ENCODE measurements at regions of chr2 and their contacts with region 1.

Region 1: GRCh38 chr2:231597014-231597611 is 4.4 kb downstream of the TEX44 start:
- DNase-seq: no peak
- ATAC-seq: no peak

Region 2: GRCh38 chr2:231530091-231531011 is 66.8 kb before region 1 on chr2 and contains the start of gene NMUR1:
- intact Hi-C with region 1: loop called in 1 of 2 experiments (anchors 10 kb)
- DNase-seq: peak in 1 of 2 donors; percentile 70
- ATAC-seq: peak; percentile 87
- total RNA-seq, gene NMUR1: 0.15 to 1.3 TPM

Region 3: DNA sequence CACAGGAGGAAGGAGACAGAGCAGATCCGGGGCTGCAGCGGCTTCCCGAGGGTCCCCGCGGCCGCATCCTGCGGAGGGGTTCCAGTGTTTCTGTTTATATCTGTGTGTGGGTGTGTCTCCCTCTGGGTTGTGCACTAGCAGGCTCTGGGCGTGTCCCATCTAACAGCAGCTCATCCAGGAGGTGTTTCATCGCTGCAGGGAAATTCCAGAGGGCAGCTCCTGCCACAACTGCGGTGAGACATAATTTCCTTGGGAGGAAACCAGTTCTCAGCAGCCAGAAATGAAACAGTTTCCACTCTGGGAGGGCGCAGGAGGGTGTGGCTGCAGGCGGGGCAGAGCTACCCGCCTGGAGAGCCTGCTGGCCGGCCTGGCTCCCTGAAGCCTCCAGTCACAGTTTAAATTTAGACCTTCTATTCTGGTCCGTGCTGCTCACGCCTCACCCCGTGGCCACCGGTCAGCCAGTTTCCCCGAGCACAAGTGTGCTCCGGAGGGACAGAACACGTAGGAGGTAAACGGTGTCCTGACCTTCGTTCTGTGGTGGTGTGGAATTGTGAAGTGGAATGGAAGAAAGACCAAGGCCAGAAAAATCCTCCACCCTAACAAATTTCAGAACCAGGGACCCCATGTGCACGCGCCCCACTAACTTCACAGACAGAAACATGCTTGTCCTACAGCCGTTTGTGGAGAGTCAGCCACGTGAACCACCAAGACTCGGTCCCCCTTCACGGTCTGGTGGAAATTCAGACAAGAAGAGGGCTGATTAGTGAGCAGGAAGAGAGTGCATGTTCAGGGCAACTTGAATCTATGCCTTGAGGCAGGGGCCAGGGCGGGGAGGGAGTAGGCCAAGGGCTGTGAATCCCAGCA is 45.8 kb after region 1 on chr2:
- intact Hi-C with region 1: no loop called
- DNase-seq: peak; percentile 86 to 95
- ATAC-seq: peak; percentile 84